ENCODE measurements at regions of chr19 and their contacts with region 1.

Region 1: GRCh38 chr19:16771618-16772017 is 52.0 kb downstream of the NWD1 start:
- DNase-seq: peak; percentile 71 to 87
- H3K4me3 ChIP-seq: no peak overlapping the region
- H3K27ac ChIP-seq: no peak overlapping the region
- H3K4me1 ChIP-seq: no peaks in the 10 kb centered on the region
- H3K27me3 ChIP-seq: no peaks in the 10 kb centered on the region
- CTCF ChIP-seq: peak; percentile 79 to 89 (median 88)
- POLR2A ChIP-seq: no peak

Region 2: DNA sequence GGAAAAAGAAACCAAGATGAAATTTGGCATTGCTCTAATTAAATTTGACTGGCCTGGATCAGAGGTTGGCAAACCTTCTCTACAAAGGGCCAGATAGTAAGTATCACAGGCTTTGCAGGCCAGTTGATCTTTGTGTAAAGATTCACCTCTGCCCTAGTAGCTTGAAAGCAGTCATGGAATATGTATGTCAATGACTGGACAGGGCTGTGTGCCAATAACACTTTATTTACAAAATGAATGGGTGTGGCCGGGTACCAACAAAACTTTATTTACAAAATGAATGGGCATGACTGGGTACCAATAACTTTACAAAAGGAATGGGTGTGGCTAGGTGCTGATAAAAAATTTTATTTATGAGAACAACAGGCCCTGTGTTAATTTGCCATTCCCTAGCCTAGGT is 77.6 kb after region 1 on chr19:
- intact Hi-C with region 1: loop called (anchors 10 kb)
- DNase-seq: no peak
- H3K4me3 ChIP-seq: no peak overlapping the region
- H3K27ac ChIP-seq: no peak overlapping the region
- H3K4me1 ChIP-seq: no peaks in the 10 kb centered on the region
- H3K27me3 ChIP-seq: no peaks in the 10 kb centered on the region
- CTCF ChIP-seq: no peak
- POLR2A ChIP-seq: no peak

Region 3: DNA sequence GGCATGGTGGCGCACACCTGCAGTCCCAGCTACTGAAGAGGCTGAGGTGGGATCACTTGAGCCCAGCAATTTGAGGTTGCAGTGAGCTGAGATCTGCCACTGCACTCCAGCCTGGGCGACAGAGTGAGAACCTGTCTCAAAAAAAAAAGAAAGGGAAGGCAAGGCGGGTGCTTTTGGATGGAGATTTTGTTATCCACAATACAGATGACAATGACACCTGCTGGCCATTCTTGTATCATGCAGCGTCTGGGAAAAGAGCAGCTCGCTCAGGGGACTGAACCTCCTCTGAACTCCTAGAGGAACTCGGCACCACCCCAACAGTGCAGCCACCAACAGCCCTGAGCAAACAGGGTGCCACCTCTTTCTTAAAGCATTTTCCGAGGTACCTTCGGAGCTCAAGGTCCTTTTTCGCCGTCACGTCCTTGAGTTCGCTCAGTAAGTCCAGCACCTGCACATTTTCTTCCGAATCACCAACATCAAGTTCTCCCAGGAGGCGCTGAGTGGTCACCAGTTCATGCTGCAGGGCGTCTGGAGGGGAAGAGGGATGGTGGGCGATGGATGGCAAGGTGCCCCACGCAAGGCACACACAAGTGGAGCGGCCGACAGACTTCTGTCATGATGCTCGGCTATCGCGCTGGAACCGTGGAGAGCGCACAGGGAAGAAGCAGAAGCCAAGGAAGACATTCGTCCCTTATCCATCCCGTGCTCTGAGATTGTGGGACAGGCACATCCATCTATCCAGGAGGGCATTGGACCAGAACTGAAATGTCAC is 281.0 kb after region 1 on chr19:
- intact Hi-C with region 1: loop called (anchors 10 kb)
- DNase-seq: peak; percentile 34 to 35
- H3K4me3 ChIP-seq: no peak overlapping the region
- H3K27ac ChIP-seq: no peak overlapping the region
- H3K4me1 ChIP-seq: no peaks in the 10 kb centered on the region
- H3K27me3 ChIP-seq: no peaks in the 10 kb centered on the region
- CTCF ChIP-seq: peak; percentile 36 to 60 (median 48)
- POLR2A ChIP-seq: no peak